HepG2 (cell line): ENCODE measurements at regions of chr5 and their contacts with region 1.

Region 1: DNA sequence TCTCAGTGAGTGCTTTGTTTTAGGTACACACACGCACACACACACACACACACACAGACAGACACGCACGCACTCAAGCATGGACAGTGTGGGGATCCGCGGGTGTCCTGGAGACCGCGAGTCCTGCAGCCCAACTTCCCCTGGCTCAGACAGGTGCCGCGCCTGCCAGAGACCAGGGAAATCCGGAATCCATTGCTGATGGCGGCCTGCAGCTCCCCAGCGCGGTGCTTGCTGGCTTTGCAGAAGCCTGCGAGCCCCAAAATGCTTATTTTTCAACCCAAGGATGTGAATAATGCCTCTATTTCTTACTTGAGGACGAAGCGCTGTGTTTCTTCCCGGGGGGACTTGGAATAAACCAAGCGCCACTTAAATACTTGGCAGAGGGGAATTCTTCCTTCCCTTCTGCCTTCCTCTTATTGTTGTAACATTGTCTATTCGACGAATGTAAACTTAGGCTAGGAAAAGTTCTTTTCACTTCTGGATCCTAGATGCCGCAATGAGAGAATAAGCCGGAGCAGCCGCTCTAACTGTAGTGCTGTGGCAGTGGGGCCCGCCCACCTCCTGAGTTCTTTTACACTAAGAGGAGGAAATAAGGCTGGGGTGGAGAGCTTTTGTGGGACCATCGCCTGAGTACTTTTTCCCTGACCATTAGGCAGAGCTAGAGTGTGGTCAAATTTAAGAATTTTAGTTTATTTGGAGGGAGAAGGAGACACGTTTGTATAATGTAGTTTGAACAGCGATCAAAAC is 802 bp downstream of the ITGA2 start:
- DNase-seq: no peak
- ATAC-seq: peak; percentile 70
- H3K4me3 ChIP-seq: peak overlapping the region; percentile 87 to 91 (median 90)
- H3K27ac ChIP-seq: peak overlapping the region; percentile 70
- H3K4me1 ChIP-seq: peaks cover 64% of the 10 kb centered on the region
- H3K27me3 ChIP-seq: no peaks in the 10 kb centered on the region; a peak in 1 of 5 replicates
- CTCF ChIP-seq: peak; percentile 37
- EP300 ChIP-seq: no peak
- POLR2A ChIP-seq: no peak; a peak in 1 of 4 replicates
- RAD21 ChIP-seq: no peak; the same call in 1 of the 2 replicates

Region 2: DNA sequence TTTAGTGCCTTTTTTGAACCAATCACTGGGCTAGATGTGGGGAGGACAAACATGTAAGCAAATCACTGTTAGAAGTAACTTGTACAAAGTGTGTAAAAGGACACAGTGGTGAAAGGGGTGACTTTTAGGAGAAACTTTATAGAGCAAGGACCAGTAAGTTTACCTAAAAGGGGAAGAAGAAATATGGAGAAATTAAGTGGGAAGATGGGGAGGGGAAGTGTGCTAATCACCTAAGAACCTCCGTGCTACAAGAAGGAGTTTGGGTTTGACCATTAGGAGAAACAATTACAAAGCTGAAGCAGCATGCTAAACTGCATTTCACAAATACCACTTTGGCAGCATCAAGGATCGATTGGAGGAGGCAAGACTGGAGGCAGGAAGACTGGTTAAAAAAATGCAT is 185.0 kb before region 1 on chr5:
- CTCF ChIA-PET with region 1: no interaction called
- POLR2A ChIA-PET with region 1: no interaction called
- in situ Hi-C with region 1: no loop called
- intact Hi-C with region 1: no loop called
- DNase-seq: no peak
- ATAC-seq: no peak
- H3K4me3 ChIP-seq: no peak overlapping the region
- H3K27ac ChIP-seq: no peak overlapping the region
- H3K4me1 ChIP-seq: peaks cover 65% of the 10 kb centered on the region
- H3K27me3 ChIP-seq: no peaks in the 10 kb centered on the region; a peak in 1 of 5 replicates
- CTCF ChIP-seq: no peak
- EP300 ChIP-seq: no peak
- POLR2A ChIP-seq: no peak
- RAD21 ChIP-seq: no peak

Region 3: DNA sequence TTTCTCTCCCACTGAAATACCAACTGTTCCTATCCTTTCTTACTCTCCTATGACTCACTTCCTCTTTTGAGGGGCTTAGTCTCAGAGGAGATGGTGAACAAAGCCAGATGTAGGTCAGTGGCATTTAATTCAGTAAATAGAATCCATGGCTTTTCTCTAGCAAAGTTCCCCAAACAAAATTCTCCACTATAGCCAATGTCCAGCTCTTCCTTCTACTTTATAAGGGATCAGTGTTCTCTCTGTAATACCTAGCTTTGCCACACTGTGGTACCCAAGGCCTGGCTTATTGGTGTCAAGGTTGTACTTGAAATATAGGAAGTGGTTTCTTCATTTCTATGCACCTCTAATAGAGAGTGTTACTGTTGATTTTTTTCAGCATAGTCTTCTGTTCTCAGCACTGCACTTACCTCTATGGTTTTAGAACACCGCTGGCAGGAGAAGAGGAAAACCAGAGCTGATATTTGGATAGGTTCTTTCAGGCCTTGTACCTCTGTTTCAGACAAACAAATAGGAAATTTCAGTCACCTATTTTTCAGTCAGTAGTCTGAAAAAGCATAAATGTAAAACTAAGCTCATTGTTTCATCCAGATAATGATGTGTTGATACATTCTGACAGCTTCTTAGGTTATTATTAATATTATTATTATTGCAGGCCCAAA is 41.4 kb before region 1 on chr5:
- CTCF ChIA-PET with region 1: no interaction called
- POLR2A ChIA-PET with region 1: interaction called, 9 read pairs
- in situ Hi-C with region 1: loop called (anchors 5 kb)
- intact Hi-C with region 1: loop called (anchors 1 kb)
- DNase-seq: peak; percentile 82
- ATAC-seq: peak; percentile 99
- H3K4me3 ChIP-seq: no peak overlapping the region
- H3K27ac ChIP-seq: no peak overlapping the region
- H3K4me1 ChIP-seq: peaks cover 9% of the 10 kb centered on the region
- H3K27me3 ChIP-seq: no peaks in the 10 kb centered on the region
- CTCF ChIP-seq: peak; percentile 87
- EP300 ChIP-seq: no peak
- POLR2A ChIP-seq: no peak
- RAD21 ChIP-seq: peak; percentile 91

Region 4: DNA sequence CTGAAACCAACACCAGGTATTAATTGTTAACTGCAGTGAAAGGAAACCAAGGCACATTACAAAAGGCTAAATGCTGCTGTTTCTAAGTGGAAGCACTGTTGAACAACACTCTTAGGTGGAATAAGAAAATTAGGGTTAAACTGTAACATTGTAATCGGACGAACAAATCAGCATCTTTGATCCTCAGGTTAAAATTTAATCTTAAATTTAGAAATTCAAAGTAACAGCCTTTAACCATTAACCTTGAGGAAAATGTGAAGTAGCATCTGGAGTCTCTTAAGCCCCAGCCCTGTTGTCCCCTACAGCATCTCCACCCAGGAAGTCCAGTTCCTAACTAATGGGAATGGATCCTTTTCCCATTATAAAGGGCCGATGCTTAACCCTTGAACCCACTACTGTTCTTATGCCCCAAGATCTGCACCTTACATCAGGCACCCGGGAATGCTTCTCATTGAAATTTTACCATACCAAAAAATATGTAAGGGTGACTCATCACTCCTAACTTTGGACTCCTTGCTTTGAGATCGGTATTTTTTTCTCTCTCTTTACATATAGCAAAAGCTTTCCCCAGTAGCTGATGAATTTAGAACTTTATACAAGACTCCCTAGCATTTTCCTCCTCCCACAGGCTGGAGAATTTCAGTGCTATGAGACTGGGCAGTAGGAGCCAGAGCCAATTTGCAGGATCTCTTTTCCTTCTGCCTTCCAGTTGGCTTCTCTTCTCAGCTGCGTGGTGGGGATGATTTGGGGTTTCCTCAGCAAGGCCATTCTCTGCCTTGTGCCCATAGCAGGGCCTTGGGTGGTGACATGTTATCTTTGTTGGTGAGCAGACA is 32.8 kb before region 1 on chr5:
- CTCF ChIA-PET with region 1: no interaction called
- POLR2A ChIA-PET with region 1: interaction called, 35 read pairs
- in situ Hi-C with region 1: no loop called
- intact Hi-C with region 1: loop called (anchors 2 kb)
- DNase-seq: peak; percentile 75
- ATAC-seq: peak; percentile 86
- H3K4me3 ChIP-seq: peak overlapping the region in 2 of 3 experiments; percentile 27 to 34; a peak in 3 of 6 replicates
- H3K27ac ChIP-seq: peak overlapping the region; percentile 66
- H3K4me1 ChIP-seq: peaks cover 48% of the 10 kb centered on the region
- H3K27me3 ChIP-seq: no peaks in the 10 kb centered on the region
- CTCF ChIP-seq: no peak
- EP300 ChIP-seq: peak in 1 of 2 experiments; percentile 36; a peak in 1 of 4 replicates
- POLR2A ChIP-seq: 0 out of 4 replicates have a peak, but pooled peaks have one; percentile 10 to 27
- RAD21 ChIP-seq: no peak

Region 5: GRCh38 chr5:53019320-53019719 is 29.4 kb after region 1 on chr5:
- CTCF ChIA-PET with region 1: no interaction called
- POLR2A ChIA-PET with region 1: no interaction called
- in situ Hi-C with region 1: no loop called
- intact Hi-C with region 1: no loop called
- DNase-seq: peak; percentile 86
- ATAC-seq: peak; percentile 81
- H3K4me3 ChIP-seq: no peak overlapping the region
- H3K27ac ChIP-seq: no peak overlapping the region
- H3K4me1 ChIP-seq: peaks cover 93% of the 10 kb centered on the region
- H3K27me3 ChIP-seq: no peaks in the 10 kb centered on the region
- CTCF ChIP-seq: no peak
- EP300 ChIP-seq: peak; percentile 62 to 81; a peak in 3 of 4 replicates
- POLR2A ChIP-seq: no peak
- RAD21 ChIP-seq: no peak

Region 6: GRCh38 chr5:53095931-53096525 is 106.1 kb after region 1 on chr5:
- CTCF ChIA-PET with region 1: no interaction called
- POLR2A ChIA-PET with region 1: no interaction called
- in situ Hi-C with region 1: no loop called
- intact Hi-C with region 1: loop called (anchors 1 kb)
- DNase-seq: peak; percentile 56
- ATAC-seq: peak; percentile 31
- H3K4me3 ChIP-seq: no peak overlapping the region
- H3K27ac ChIP-seq: no peak overlapping the region
- H3K4me1 ChIP-seq: peaks cover 27% of the 10 kb centered on the region
- H3K27me3 ChIP-seq: no peaks in the 10 kb centered on the region
- CTCF ChIP-seq: peak; percentile 78
- EP300 ChIP-seq: no peak
- POLR2A ChIP-seq: no peak
- RAD21 ChIP-seq: 0 out of 2 replicates have a peak, but pooled peaks have one; percentile 13

Region 7: DNA sequence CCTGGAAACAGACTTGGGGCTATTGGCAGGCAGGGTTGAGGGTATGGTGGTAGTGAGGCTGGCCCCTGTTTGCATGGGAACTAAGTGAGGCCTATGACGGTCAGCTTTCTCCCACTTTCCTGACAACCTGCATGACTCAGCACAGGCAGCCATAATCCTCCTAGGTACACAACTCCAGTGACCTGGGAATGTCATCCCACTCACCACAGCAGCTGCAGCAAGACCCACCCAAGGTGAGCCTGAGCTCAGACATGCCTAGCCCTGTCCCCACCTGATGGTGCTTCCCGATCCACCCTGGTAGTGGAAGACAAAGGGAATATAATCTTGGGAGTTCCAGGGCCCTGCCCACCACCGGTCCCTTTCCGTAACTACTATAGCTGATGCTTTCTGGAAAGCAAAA is 749.2 kb after region 1 on chr5:
- CTCF ChIA-PET with region 1: no interaction called
- POLR2A ChIA-PET with region 1: no interaction called
- in situ Hi-C with region 1: no loop called
- intact Hi-C with region 1: no loop called
- DNase-seq: no peak
- ATAC-seq: no peak; the same call in 2 of the 3 replicates
- H3K4me3 ChIP-seq: no peak overlapping the region
- H3K27ac ChIP-seq: no peak overlapping the region
- H3K4me1 ChIP-seq: no peaks in the 10 kb centered on the region
- H3K27me3 ChIP-seq: no peaks in the 10 kb centered on the region
- CTCF ChIP-seq: no peak
- EP300 ChIP-seq: no peak
- POLR2A ChIP-seq: no peak
- RAD21 ChIP-seq: no peak